PC-9 (cell line): ENCODE measurements at regions of chr11 and their contacts with region 1.

Region 1: DNA sequence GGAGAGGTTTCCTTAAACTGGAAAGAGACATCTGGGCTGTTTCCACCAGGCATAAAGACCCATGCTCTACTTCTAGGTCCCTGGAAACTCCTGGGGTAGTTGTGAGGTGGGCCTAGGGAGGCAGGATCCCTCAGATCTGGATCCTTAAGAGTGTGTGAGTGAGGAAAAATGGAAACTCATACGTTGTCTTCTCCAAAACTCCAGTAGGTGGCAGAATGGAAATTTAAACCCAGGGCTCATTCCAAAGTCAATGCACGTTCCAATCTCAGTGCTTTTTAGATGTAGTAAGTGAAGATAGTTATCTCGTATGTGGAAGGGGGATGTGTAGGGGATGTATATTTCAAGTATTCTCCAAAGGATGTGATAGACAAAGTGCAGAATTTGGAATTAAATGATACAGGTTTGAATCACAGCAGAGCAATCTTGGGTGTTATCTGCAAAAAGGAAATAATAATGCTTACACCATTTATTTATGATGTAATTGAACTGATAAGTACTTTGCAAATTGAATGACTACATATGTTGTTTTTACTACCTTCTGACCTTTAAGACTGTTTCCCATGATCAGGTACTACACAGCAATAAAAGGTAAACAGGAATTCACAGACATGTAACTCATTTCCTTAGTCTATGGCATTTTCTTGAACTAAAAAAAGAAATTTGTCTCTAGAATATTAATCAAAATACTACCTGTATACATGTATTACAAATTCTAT is 13.1 kb upstream of the MMP1 start:
- DNase-seq: no peak
- H3K4me3 ChIP-seq: no peak overlapping the region
- H3K27ac ChIP-seq: no peak overlapping the region
- H3K4me1 ChIP-seq: no peaks in the 10 kb centered on the region
- H3K27me3 ChIP-seq: no peaks in the 10 kb centered on the region
- CTCF ChIP-seq: peak; percentile 77

Region 2: GRCh38 chr11:102733232-102733875 is 77.7 kb before region 1 on chr11:
- CTCF ChIA-PET with region 1: no interaction called
- POLR2A ChIA-PET with region 1: no interaction called
- intact Hi-C with region 1: loop called (anchors 5 kb)
- DNase-seq: peak; percentile 50 to 74
- H3K4me3 ChIP-seq: no peak overlapping the region
- H3K27ac ChIP-seq: no peak overlapping the region
- H3K4me1 ChIP-seq: no peaks in the 10 kb centered on the region
- H3K27me3 ChIP-seq: no peaks in the 10 kb centered on the region; the same call in 1 of the 2 replicates
- CTCF ChIP-seq: peak; percentile 98

Region 3: DNA sequence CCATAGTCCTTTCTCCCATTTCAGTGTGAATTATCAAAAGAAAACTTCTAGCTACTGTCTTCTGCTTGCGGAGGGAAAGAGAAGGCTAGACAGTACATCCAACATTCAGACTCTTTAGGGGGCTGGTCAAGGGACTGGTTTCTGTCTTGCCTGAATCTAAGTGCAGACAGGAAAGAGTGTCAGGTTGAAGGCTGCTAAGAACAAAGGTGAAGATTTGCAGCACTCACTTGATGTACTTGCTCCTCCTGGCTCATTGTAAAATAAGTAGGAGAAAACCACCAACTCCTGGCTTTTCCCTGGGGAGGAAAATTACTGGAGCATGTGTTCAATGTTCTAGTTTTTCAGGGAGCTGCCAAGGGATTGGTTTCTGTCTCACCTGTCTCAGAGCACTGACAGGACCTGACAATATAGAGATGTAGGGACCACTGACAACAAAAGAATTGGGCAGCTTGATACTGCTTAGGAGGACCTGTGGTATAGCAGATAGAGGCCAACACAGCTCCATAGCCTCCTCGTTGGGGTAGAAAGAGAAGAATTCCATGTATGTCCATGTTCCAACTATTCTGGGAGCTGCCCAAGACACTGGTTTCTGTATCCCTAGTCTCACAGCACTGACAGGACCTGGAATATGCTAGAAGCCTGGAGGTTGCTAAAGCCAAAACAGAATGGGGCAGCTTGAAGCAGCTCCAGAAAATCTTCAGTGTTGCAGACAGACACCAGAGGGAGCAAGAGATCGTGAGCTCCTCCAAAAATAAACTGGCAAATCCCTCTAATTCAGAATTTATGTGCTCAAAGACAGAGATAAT is 103.3 kb after region 1 on chr11:
- CTCF ChIA-PET with region 1: no interaction called
- POLR2A ChIA-PET with region 1: no interaction called
- intact Hi-C with region 1: loop called (anchors 10 kb)
- DNase-seq: peak in 1 of 2 experiments; percentile 5
- H3K4me3 ChIP-seq: no peak overlapping the region
- H3K27ac ChIP-seq: no peak overlapping the region
- H3K4me1 ChIP-seq: peaks cover 24% of the 10 kb centered on the region
- H3K27me3 ChIP-seq: no peaks in the 10 kb centered on the region
- CTCF ChIP-seq: peak; percentile 78

Region 4: DNA sequence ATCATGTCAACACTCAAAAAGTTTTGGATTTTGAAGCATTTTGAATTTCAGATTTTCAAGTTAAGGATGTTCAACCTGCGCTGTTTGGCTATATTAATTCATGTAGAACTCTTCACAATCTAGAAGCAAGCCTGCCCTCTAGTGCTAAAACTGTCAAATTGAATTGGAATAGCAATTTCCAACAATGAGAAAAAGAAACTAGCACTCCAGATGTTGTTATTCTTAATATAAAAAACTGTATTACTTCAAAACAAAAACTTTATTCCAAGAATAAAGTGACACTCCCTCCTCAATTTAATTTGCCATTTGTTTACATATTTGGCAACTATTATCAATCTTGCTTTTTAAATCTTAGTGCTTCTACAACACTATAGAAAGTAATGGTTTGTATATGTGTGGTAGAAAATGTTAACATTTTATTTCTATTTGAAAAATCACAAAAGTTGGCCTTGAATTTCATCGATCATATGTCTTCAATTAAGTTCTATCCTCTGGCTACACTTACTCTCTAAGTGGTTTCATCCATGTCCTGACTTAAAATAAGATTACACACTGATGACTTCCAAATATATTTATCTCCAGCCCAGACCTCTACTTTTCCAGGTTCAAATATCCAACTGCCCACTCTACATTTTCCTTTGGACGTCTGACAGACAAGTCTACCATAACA is 244.3 kb after region 1 on chr11:
- CTCF ChIA-PET with region 1: no interaction called
- POLR2A ChIA-PET with region 1: no interaction called
- intact Hi-C with region 1: loop called (anchors 1 kb)
- DNase-seq: no peak
- H3K4me3 ChIP-seq: no peak overlapping the region
- H3K27ac ChIP-seq: no peak overlapping the region
- H3K4me1 ChIP-seq: no peaks in the 10 kb centered on the region
- H3K27me3 ChIP-seq: no peaks in the 10 kb centered on the region
- CTCF ChIP-seq: peak; percentile 85